Posterior cingulate gyrus (tissue), 11 donors: ENCODE measurements at regions of chr10 and their contacts with region 1.

Region 1: DNA sequence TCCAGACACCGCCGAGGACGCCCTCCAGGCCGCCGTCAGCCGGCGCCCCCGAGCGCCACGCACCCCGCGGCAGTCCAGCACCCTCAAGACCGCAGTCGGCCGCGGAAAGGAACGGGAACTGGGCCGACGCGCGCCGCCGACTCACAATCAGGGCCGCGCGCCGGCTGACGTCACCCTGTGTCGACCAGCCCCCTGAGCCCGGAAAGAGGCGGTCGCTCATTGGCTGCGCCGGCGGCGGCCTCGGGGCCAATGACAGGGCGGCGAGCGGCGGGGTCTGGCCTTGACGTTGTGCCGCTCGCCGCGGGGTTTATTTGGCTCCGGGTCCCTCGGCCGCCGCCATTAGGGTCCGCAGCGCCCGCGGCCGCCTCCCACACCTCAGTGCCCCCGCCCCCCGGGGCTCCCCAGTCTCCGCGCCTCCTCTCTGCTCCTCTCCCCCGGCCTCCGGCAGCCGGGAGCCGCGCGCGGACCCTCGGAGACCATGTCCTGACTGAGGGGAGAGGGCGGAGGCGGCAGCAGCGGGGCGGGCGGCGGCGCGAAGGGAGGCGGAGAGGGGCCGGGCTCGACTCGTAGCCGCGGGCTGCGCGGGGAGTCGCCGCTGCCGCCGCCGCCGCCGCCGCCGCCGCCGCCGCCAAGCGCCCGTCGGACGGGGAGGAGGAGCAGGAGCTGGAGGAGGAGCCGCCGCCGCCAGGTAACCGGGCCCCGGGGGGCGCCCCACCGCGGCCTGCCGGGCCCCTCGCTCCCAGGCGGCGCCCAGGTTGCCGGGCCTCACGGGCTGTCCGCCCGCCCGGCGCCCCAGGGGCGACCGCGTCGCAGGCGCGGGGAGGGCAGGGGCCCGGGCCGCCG is 25.1 kb upstream of the ZRANB1 start:
- DNase-seq: peak; percentile 95 to 99 (median 97)

Region 2: GRCh38 chr10:124798364-124798763 is 118.4 kb before region 1 on chr10:
- intact Hi-C with region 1: loop called (anchors 5 kb)
- DNase-seq: no peak

Region 3: DNA sequence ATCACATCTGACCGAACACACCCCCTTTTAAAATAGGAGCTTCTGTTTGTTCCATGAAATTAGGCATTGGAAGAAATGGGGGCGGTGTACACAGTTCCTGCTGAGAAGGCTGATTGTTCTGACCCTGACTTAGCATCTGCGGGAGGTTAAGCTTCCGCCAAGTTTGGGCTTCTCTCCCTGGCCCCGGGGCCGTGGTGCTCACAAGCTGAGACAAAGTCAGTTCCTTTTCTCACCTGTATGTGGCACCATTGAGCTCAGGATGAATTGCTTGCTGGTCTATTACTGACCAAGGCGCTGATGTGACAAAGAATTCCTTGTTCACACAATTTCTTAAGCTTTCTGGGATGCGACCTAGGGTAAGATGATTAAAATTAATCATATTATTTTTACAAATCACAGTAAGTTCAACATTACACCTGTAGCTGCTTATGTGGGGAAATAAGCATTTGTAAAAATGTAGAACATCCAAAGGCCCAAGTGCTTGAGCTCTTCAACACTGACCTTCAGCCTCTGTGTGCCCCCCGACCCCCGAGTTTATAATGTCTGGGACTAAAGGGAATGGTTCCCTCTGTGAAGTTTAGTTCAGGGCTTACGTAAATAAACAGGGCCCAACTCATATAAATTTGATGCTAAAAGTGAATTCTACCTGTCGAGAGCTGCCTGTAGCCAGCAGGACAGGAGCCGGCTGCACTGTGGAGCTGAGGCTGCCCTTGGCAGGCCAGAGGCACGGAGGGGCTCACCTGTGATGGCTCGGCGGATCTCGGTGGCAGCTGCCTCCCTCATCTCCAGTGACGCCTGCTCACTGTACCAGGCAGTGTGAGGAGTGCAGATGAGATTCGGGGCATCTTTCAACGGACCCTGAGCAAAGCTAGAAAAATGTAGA is 75.9 kb after region 1 on chr10:
- intact Hi-C with region 1: loop called (anchors 5 kb)
- DNase-seq: peak in 7 of 10 donors; percentile 62 to 94 (median 73)

Region 4: DNA sequence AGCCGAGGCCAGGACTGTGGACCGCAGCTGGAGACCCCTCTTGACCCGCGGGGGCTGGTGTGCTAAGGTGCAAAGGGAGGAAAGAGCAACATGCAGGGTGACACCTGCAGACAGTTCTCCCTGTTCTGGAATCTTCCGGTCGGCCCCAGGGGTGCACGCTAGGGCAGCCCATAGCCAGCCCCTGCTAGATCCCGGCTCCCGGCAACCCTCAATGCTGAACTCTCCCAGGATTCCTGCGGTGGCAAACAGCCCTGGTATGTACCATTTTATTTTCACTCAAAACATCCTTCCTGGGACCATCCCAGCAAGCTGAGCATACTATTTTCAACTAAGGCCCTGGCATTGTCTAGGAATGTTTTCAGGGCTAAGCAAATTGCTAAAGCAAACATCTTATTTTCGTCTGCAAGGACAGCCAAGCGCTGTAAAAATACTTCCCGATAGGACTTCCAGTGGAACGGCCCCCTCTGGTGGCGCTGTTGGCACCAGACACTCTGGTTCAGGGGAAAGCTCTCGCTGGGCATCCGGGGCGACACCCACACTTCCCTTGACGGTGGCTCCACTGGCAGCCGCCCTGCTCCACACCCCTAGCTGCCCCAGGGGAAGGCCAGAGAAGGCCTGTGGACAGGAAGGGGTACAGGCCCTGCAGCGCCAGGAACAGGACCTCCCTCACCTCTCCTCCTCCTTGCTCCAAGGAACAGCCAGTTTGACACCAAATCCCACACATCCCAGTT is 144.2 kb after region 1 on chr10:
- intact Hi-C with region 1: loop called (anchors 5 kb)
- DNase-seq: peak; percentile 69 to 98 (median 90)

Region 5: DNA sequence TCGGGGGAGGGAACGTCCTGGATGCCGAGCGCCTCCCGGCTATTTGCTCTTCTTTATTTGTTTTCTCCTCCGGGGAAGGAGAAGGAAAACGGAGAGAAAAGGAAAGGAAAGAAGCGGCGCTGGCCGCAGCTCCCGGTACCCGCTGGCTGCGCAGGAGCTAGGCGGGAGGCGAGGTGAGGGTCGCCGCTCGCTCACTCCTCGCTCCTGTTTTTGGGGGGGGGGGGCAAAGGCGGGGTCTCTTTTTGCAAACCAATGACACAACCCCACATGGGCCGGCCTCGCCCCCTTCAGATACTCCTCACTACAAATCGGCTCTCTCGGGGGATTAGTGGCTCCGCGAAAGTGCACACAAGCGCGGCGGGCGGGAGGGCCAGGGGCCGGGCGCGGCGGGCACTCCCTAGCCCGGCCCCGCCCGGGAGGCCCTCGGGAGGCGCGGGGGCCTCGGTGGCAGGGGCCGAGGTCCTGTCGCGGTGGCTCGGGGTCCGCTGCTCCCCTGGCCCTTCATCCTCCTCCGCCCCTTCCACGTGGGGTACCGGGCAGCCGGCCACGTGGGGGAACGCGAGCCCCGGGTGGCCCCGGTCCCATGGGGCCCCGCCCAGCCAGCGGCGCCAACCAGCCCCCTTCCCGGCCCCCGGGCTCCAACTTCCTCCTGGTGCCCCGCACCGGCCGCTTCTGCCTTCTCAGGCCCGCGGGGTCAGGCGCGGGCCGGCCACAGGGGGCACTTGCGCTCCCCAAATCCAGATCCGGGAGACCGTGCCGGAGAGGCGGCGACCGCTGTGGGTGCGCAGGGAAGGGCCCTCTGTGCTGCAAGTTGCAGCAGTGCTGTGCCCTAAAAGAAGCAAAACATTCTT is 244.3 kb after region 1 on chr10:
- intact Hi-C with region 1: loop called (anchors 5 kb)
- DNase-seq: peak in 9 of 10 donors; percentile 53 to 95 (median 65)